HAP-1 (cell line): ENCODE measurements at regions of chr13 and their contacts with region 1.

Region 1: DNA sequence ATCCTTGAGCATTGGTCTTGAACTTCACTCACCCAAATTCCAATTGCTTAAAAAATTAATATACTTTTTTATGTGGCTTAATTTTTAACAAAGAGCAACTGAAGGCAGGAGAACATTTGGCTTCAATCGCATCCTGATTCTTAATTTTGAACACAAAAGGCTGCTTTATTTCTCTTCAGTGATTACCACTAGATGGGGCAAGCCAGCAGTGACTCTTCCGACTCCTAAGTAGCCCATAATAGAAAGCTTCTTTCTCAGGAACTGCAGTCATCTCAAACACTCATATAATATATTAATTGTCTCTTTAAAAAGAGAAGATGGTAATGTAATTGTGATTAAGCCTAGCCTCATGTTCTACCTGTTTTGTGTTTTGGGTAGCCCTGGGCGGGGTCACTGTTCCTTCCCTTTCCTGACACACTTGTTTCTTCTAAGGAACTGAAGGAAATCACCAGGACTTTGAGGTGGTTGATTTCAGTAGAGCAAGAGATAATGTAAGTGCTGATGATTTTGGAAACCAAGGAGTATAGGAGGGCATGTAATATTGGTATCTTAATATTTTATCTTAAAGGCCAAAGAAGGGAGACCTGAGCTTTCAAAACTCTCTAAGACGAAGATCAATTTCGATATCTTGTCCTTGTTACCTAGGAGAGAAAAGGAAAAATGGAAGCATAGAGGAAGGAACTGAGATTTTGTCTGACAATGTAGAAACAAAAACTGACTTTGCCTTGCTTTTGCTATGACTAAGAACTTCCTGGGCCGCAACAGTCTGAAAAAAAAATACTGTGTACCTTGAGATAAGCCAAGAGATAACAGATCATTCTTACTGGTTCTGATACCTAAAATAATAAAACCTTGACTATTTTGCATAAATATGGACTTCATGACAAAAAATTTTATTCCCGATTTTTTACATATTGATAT is 73.1 kb downstream of the TNFSF13B start:
- DNase-seq: peak in 1 of 2 experiments; percentile 4
- H3K4me3 ChIP-seq: no peak overlapping the region
- H3K4me1 ChIP-seq: no peaks in the 10 kb centered on the region
- H3K27me3 ChIP-seq: peaks cover 5% of the 10 kb centered on the region

Region 2: DNA sequence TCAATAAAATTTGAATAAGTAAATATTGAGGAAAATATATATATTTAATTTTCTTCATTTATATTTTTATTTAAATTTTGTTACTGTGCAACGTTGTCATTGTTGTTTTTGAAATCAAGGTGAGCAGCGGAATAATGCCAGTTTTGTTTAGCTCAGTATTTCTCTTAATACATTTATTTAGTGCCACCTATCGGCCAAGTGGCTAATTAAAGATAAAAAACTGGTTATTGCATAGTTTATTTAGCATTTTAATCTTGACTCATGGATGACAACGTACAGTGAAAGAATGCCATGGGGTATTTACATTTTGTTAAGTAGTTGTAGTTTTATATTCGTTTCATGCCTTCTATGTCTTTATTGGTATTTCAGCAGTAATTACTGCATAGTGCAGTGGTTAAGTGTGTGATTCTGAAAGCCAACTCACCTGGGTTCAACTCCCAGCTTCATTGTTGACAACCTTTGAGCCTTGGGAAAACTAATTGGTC is 552.6 kb after region 1 on chr13:
- in situ Hi-C with region 1: loop called (anchors 25 kb)
- DNase-seq: peak in 1 of 2 experiments; percentile 9
- H3K4me3 ChIP-seq: no peak overlapping the region
- H3K4me1 ChIP-seq: no peaks in the 10 kb centered on the region
- H3K27me3 ChIP-seq: no peaks in the 10 kb centered on the region